ENCODE measurements at regions of chr12 and their contacts with region 1.

Region 1: DNA sequence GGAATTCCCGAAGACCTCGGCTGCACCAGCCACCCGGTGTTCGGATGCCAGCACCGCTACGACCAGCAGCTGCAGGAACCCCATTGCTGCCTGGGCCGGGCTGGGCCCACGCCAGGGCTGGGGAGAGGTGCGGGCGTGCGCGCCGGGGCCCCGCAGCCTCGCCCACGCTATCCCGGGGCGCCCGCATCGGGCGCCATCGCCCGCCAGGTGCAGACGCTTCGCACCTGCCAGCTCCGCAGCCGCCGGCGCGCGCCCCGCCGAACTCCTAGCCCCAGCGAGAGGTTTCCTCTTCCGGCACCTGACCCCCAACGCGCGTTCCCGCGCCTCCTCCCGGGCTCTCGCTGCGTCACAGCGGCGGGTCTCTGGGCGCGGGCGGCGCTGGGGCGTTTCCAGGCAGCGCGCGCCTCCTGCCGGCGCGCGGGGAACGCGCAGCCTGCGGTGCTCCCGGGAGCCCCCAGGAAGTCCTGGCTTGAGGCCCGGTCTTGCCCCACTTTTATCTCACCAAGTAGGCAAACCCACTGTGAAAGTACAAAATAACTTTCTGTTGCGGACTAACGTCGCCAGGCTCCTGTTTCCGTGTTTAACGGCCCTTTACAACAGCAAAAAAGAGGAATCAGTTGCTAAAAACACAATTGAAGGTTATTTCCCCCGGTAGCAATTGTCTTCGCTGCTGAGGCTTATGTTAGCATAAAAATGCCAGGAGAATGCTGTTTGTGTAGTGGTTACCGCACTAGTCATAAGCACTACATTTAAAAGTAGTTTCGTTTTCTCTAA is at the start of gene TM7SF3:
- H3K4me3 Mint-ChIP-seq: peak within 1 kb of the TSS; percentile 93
- H3K27ac Mint-ChIP-seq: peak within 1 kb of the TSS; percentile 93
- H3K4me1 Mint-ChIP-seq: peaks cover 47% of the 10 kb centered on the region
- H3K27me3 Mint-ChIP-seq: no peaks in the 10 kb centered on the region

Region 2: DNA sequence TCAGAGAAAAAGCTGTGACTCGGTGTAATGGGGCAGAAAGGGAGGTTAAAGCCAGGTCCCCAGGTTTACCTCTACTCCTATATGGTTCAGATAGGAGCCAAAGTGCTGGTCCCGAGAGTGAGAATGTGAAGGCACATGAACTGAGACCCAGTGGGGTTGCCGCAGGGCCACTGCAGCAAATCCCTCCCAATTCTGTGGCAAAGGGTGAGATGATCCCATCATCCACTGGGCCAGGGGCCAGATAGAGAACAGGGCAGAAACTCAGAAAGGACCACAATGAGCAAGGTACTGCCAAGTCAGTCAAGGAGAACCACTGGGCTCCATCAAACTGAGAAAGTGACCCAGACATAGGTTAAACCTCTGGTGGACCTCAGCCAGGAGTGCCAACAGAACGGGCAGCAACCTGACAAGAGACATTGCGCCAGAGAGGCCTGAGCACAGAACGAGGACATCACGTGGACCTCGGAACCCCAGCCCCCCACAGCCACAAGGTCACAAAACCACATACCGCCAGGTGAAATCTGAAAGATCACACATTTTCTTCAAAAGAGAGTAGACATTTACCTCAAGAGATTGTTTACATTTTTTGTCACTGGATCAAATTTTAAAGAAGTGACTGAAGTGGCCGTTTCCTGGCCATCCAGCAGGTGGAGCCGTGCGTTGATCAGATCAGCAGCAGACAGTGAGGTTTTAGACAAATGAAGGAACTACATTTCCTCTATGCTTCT is 160.8 kb before region 1 on chr12:
- intact Hi-C with region 1: loop called (anchors 2 kb)
- H3K4me3 Mint-ChIP-seq: no peak overlapping the region
- H3K27ac Mint-ChIP-seq: peak overlapping the region; percentile 41
- H3K4me1 Mint-ChIP-seq: no peaks in the 10 kb centered on the region
- H3K27me3 Mint-ChIP-seq: no peaks in the 10 kb centered on the region

Region 3: GRCh38 chr12:26937875-26938700 is 76.2 kb before region 1 on chr12 and contains the starts of genes FGFR1OP2 and INTS13:
- intact Hi-C with region 1: loop called (anchors 1 kb)
- H3K4me3 Mint-ChIP-seq: peak within 1 kb of the TSS; percentile 96
- H3K27ac Mint-ChIP-seq: peak within 1 kb of the TSS; percentile 99
- H3K4me1 Mint-ChIP-seq: peaks cover 42% of the 10 kb centered on the region
- H3K27me3 Mint-ChIP-seq: no peaks in the 10 kb centered on the region

Region 4: DNA sequence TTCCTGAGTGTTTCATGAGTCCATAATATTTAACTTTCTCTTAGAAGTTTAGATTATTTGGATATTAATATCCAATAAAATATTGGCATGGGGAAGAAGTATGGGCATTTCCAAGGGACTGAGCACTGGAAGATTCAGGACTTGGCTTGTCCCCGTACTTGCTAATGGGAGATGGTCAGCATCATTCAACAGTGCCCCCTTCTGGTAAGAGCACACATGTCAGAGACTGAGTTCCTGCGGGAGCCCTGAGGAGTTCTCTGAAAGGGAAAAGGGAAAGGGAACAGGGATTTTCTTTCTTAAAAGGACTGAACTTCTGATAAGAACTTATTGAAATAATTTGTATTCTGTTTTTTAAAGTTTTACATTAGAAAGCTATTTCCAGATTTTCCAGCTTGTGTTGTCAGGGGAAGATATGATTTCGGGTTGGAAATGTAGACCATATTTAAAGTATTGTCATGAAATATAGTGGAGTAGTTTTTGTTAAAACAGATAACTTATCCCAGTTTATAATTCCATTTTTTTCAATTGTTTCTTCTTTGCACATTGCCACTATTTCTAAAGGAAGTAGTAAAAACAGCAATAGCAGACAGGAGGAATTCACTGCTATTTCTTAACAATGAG is 127.9 kb after region 1 on chr12:
- intact Hi-C with region 1: loop called (anchors 5 kb)
- H3K4me3 Mint-ChIP-seq: no peak overlapping the region
- H3K27ac Mint-ChIP-seq: no peak overlapping the region
- H3K4me1 Mint-ChIP-seq: peaks cover 8% of the 10 kb centered on the region
- H3K27me3 Mint-ChIP-seq: no peaks in the 10 kb centered on the region

Region 5: DNA sequence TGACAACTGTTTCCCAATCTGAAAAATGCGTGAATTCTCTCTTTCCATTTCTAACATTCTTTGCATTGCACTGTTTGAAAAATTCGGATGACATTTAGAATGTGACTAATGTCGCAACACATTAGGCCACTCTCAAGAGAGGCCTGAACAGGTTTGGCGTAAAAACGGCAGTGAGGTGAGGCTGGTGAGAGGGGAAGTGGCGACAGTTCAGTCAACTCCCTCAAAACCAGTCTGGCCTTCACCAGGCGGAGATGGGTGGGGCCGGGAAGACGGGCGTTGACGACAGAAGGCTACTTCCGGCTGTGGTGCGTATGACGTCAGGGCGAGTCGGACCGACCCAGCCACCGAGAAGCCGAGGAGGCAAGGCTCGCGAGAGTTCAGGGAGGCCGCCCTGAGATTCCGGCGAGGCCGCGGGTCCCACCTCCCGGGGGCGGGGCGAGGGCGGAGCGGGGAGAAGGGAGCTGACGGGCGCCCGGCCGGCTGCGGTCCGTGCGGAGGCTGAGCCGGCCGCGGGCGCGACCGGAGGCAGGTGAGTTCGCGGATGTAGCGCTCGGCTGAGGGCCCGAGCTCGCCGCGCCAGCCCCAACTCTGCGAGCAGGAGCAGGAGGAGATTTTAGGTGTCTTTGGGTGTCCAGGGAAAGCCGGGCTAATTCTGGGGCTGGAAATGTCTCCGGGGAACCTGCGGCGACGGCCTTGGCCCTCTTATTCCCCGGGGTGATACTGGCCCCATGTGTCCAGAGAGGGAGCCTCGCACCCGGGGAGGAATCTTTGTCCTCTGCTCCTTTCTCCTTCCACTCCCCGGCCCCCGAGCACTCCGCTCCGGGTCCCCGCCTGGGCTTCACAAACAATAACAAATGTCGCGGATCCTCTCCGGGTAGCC is 229.8 kb after region 1 on chr12 and contains the start of gene STK38L:
- intact Hi-C with region 1: loop called (anchors 2 kb)
- H3K4me3 Mint-ChIP-seq: peak within 1 kb of the TSS; percentile 99
- H3K27ac Mint-ChIP-seq: peak within 1 kb of the TSS; percentile 98
- H3K4me1 Mint-ChIP-seq: peaks cover 50% of the 10 kb centered on the region
- H3K27me3 Mint-ChIP-seq: no peaks in the 10 kb centered on the region